ENCODE measurements at regions of chr9 and their contacts with region 1.

Region 1: DNA sequence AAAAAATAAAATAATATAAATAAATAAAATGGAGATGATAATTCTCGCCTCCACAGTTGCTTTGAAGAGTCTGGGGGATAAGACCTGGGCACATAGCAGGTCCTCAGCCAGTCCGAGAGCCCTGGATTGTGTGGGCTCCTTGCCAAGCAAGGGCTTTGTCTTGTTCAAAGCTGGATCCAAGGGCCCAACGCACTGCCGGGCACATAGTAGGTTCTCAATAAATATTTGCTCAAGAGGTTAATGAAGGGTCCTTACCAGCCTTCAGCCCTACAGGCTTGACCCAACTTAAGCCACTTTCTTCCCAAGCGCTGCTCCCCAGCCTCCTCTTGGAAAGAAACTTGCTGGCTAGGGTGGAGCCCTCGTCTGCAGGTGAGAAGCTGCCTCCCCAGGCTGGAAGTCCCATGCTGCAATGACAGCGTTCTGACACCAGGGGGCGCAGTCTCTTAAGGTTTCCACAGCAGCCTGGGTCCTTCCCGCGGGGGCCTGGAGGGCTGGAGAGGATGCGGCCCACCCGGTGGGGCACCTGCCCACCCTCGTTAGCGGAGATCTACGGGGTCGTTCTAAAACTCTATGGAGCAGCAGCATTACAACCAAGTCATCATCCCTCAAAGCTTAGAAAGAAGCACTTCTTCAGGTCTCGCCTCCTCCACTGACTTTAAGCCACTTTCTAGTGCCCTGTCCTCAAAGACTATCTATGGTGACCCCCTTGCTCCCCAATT is 115.2 kb downstream of the LHX2 start:
- DNase-seq: peak; percentile 69 to 81
- H3K4me3 ChIP-seq: no peak overlapping the region
- H3K27ac ChIP-seq: no peak overlapping the region
- H3K4me1 ChIP-seq: peaks cover 0 to 13% (median 8%) of the 10 kb centered on the region in 4 donors
- H3K27me3 ChIP-seq: peaks cover 0 to 18% of the 10 kb centered on the region in 2 donors
- CTCF ChIP-seq: peak; percentile 97 to 98

Region 2: DNA sequence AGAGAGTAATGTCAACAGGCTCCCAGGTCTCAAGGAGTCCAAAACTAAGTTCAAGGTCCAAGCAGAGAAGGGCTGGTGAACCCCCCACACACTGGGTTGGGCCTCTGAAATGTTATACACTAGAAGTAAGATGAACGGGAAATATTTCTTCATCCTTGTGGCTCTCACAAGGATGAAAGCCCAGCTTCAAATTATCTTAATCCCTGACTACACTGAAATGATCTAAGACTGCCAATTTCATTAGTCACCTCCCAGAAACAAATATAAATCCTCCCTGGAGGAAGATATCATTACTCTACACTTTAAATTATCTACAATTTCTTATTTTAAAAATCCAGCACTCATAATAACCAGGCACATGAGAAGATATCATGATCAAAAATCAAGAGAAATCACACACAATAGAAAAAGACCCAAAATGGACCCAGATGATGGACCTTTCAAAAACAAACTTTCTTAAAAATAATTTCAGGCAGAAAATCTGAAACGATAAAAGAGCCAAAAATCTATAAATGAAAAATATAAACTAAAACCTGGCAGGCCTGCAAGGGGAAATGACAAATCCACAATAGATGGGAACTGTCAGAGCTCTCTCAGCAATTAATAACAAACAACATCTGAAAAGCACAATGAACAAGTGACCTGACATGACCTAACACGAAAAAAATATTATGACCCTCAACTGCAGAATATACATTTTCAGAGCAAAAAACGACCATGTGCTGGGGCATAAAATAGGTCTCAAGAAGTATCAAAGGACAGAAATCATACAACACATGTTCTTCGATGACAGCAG is 975.8 kb before region 1 on chr9:
- intact Hi-C with region 1: no loop called
- DNase-seq: no peak
- H3K4me3 ChIP-seq: no peak overlapping the region
- H3K27ac ChIP-seq: no peak overlapping the region
- H3K4me1 ChIP-seq: no peaks in the 10 kb centered on the region
- H3K27me3 ChIP-seq: no peaks in the 10 kb centered on the region
- CTCF ChIP-seq: no peak

Region 3: DNA sequence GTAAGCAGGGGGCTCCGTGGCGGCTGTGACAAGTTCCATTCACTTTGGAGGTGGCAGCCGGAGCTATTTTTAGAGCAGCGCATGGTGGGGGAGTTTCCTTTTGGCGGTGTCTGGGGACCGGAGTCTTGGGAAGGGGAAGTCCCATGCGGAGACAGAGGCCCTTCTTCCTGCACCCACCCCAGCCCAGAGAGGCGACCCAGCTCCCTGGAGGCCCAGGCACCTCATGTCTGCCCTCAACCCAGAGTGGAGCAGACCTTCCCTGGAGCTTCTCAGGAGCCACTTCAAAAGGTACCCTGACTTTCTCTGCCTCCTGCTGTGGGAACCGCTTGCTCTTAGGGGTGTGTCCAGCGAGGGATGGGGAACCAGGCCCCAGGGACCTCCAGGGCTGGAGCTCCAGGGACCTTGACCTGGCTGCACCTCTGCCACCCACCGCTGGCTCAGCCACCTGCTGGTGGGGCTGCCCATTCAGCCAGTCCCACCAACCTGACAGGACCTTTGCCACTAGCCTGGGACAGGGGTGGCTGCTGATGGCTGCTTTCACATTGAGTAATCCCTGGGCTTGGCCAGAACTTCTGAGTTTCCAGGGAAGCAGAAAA is 165.2 kb after region 1 on chr9:
- intact Hi-C with region 1: loop called (anchors 10 kb)
- DNase-seq: peak in 1 of 2 donors; percentile 79
- H3K4me3 ChIP-seq: no peak overlapping the region
- H3K27ac ChIP-seq: peak overlapping the region; percentile 26 to 39
- H3K4me1 ChIP-seq: peaks cover 0 to 84% (median 50%) of the 10 kb centered on the region in 4 donors
- H3K27me3 ChIP-seq: no peaks in the 10 kb centered on the region
- CTCF ChIP-seq: no peak

Region 4: GRCh38 chr9:124320062-124320973 is 193.6 kb after region 1 on chr9:
- intact Hi-C with region 1: loop called (anchors 5 kb)
- DNase-seq: peak; percentile 67 to 84
- H3K4me3 ChIP-seq: no peak overlapping the region
- H3K27ac ChIP-seq: peak overlapping the region; percentile 15 to 17
- H3K4me1 ChIP-seq: peaks cover 0 to 9% (median 4%) of the 10 kb centered on the region in 4 donors
- H3K27me3 ChIP-seq: no peaks in the 10 kb centered on the region
- CTCF ChIP-seq: peak; percentile 83 to 84

Region 5: DNA sequence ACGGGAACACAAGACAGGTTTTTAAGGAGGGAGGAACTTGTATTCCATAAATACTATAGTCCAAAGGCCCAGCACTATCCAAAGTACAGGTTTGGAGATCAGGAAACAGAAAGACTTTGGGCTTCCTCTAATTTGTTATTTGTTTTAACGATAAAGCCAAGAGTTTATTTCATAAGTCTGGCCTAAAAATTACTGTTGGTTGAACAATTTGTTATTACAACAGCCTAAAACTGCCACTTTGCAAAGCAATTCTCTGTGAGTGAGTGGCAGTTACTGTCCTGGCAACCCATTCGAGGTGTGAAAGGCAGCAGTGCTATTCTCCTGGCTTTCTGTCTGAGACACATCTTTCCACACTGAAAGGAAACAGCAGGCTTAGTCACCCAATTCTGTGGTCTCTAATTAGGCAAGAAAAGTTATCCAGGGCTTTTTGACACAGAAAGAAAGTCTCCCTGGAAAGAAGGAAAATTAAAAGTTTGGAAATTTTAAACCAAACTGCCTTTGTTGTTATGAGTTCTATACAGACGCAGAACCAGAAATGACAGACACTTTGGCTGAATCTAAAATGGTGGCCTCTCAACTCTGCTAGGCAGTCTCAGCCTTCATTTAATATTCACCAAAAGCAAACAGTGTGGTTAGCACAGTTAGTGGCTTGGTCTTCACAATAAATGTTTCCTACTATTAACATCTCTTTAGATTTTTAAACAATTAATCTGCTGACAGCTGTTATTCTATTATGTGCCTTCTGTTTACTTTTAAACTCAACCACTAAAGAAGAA is 254.6 kb after region 1 on chr9:
- intact Hi-C with region 1: loop called (anchors 10 kb)
- DNase-seq: no peak
- H3K4me3 ChIP-seq: no peak overlapping the region
- H3K27ac ChIP-seq: no peak overlapping the region
- H3K4me1 ChIP-seq: peaks cover 0 to 23% (median 12%) of the 10 kb centered on the region in 4 donors
- H3K27me3 ChIP-seq: no peaks in the 10 kb centered on the region
- CTCF ChIP-seq: no peak

Region 6: DNA sequence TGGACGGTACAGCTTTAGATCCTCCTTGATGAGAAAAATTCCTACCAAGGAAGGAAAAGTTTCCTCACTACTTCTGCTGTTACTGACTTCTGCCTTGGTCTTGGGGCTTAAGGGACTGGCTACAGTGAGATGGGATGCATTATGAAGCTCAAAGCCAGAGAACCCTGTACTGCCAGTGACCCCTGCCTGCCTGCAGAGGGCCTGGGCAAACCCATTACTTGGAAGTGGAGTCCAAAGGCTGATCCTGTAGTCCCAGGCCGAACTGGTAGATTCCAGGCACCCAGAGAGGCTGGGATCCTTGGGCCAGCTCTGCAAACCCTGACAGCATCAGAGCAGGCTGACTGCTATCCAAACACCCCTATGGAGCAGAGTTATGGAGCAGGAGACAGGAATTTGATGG is 406.2 kb after region 1 on chr9:
- intact Hi-C with region 1: loop called (anchors 10 kb)
- DNase-seq: no peak
- H3K4me3 ChIP-seq: no peak overlapping the region
- H3K27ac ChIP-seq: no peak overlapping the region
- H3K4me1 ChIP-seq: no peaks in the 10 kb centered on the region
- H3K27me3 ChIP-seq: no peaks in the 10 kb centered on the region
- CTCF ChIP-seq: no peak

Measured in tibial artery (tissue), 4 donors.